PC-3 (cell line): ENCODE measurements at regions of chr5 and their contacts with region 1.

Region 1: GRCh38 chr5:93800988-93801811 is 59.8 kb upstream of the POU5F2 start:
- DNase-seq: peak; percentile 90
- ATAC-seq: peak; percentile 92
- H3K4me3 ChIP-seq: peak overlapping the region; percentile 36; the same call in 1 of the 2 replicates
- H3K27ac ChIP-seq: no peak overlapping the region
- H3K4me1 ChIP-seq: peaks cover 16% of the 10 kb centered on the region
- H3K27me3 ChIP-seq: no peaks in the 10 kb centered on the region
- CTCF ChIP-seq: peak; percentile 85

Region 2: DNA sequence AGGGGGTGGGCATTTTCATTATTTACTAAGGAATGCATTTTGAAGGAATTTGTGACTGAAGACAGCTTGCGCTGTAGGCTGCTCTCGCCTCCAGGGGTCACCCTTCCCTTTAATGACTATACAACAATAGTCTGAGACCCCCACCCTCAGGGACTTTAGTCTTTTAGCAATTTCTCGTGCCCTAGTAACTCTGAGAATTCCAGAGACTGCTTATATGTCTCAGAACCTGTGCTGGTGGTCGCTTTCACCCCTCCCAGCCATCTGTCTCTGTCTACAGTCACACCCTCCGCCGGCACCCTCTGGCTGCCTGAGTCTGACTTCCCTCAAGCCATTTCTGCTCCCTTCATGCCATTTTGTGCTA is 891.6 kb before region 1 on chr5:
- CTCF ChIA-PET with region 1: interaction called, 6 read pairs
- POLR2A ChIA-PET with region 1: interaction called, 8 read pairs
- intact Hi-C with region 1: loop called (anchors 10 kb)
- DNase-seq: peak; percentile 29
- ATAC-seq: peak; percentile 50; the same call in 1 of the 2 replicates
- H3K4me3 ChIP-seq: no peak overlapping the region
- H3K27ac ChIP-seq: no peak overlapping the region
- H3K4me1 ChIP-seq: peaks cover 16% of the 10 kb centered on the region
- H3K27me3 ChIP-seq: no peaks in the 10 kb centered on the region
- CTCF ChIP-seq: peak; percentile 83

Region 3: DNA sequence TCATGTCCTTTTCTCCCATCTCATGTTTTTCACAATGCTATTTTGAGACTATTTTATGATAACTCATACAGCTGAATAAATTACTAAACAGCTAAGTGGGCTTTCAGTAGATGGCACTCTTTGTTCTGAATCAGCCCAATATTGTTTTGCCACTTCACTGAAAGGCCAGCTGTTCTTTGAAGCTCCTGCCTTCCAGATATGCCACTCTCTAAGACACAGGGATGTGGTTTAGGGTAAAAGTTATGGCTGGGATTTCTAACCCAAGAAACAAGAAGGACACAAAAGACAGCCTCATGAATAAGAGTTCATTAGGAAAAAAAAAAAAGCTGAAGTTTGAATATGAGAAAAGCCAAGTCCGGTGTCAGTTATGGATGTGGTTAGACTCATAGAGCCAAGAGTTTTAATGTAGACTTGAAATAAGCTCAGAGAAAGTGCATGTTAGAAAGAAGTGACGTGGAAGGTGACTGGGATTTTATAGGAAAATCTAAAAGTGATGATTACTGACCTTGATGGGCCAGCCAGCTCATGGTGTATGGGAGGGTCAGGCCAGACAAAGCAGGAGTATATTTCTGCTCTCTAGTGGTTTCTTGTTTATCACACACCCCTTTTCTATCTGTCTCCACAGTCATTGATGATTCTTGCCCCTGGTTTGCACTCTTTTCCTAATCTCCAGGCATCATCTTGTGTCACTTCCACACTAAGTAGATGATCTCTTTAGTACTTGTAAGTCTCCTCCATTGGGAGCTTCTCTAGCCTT is 708.7 kb before region 1 on chr5:
- CTCF ChIA-PET with region 1: interaction called, 13 read pairs
- POLR2A ChIA-PET with region 1: no interaction called
- intact Hi-C with region 1: no loop called
- DNase-seq: peak; percentile 65
- ATAC-seq: peak; percentile 87
- H3K4me3 ChIP-seq: no peak overlapping the region
- H3K27ac ChIP-seq: peak overlapping the region; percentile 24; the same call in 1 of the 2 replicates
- H3K4me1 ChIP-seq: peaks cover 14% of the 10 kb centered on the region
- H3K27me3 ChIP-seq: no peaks in the 10 kb centered on the region
- CTCF ChIP-seq: peak; percentile 74

Region 4: DNA sequence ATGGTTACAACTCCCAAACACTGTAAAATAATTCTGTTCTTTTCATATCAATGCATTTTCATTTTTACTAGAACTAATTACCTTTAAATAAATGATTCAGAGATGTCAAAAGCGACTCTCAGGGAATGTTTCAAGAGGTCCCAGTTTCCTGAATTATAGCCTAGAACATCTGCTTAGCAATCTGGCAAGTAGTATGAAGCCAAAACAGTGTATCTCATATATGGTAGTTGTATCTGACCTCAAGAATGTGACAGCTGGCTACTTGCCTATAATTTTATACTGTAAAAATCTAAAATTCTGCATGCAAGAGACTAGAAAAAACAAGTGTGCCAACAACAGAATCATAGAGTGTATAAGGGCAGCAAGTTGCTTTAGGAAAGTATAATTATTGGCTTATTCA is 127.9 kb after region 1 on chr5:
- CTCF ChIA-PET with region 1: no interaction called
- POLR2A ChIA-PET with region 1: no interaction called
- intact Hi-C with region 1: no loop called
- DNase-seq: no peak
- ATAC-seq: no peak
- H3K4me3 ChIP-seq: no peak overlapping the region
- H3K27ac ChIP-seq: no peak overlapping the region
- H3K4me1 ChIP-seq: peaks cover 5% of the 10 kb centered on the region
- H3K27me3 ChIP-seq: no peaks in the 10 kb centered on the region
- CTCF ChIP-seq: no peak